Gastrocnemius medialis (tissue), 4 donors: ENCODE measurements at regions of chr17 and their contacts with region 1.

Region 1: DNA sequence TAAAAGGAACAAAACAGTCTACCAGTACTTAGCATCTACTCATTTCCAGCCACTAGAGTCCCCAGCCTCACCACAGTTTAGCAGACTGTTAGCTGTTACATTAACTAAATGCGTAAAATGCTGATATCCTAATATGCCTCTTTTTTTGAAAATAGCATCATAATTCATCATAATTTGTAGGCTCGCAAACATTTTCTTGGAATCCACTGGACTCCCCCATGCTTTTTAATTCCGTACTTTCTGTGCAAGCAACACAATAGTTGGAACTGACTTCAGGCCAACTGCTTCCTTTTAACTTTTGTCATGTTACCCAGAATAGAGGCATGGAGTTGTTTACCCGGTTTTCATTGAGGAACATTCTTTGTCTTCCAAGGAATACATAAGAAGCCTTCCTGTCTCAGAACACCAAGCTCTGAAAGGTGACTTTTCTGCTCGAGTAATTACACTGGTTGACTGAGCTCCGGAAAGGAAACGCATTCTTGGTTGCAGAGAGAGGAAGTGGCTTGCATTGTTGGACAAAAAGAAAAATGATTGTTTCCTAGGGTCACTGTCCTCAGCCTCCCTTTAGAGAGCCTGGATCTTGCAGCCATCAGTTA is 30.9 kb upstream of the SEC14L1 start:
- DNase-seq: peak in 1 of 2 donors; percentile 23
- ATAC-seq: peak; percentile 83 to 97
- H3K4me3 ChIP-seq: no peak overlapping the region
- H3K27ac ChIP-seq: peak overlapping the region; percentile 71 to 92 (median 80)
- H3K4me1 ChIP-seq: peaks cover 19 to 36% of the 10 kb centered on the region in 2 donors
- H3K27me3 ChIP-seq: no peaks in the 10 kb centered on the region
- CTCF ChIP-seq: no peak
- POLR2A ChIP-seq: peak in 1 of 2 donors; percentile 28

Region 2: GRCh38 chr17:76865174-76865573 is 244.7 kb before region 1 on chr17:
- in situ Hi-C with region 1: no loop called
- intact Hi-C with region 1: no loop called
- DNase-seq: no peak
- ATAC-seq: no peak
- H3K4me3 ChIP-seq: no peak overlapping the region
- H3K27ac ChIP-seq: no peak overlapping the region
- H3K4me1 ChIP-seq: peaks cover 0 to 3% of the 10 kb centered on the region in 2 donors
- H3K27me3 ChIP-seq: peaks cover 13 to 18% (median 14%) of the 10 kb centered on the region in 3 donors
- CTCF ChIP-seq: no peak
- POLR2A ChIP-seq: no peak

Region 3: DNA sequence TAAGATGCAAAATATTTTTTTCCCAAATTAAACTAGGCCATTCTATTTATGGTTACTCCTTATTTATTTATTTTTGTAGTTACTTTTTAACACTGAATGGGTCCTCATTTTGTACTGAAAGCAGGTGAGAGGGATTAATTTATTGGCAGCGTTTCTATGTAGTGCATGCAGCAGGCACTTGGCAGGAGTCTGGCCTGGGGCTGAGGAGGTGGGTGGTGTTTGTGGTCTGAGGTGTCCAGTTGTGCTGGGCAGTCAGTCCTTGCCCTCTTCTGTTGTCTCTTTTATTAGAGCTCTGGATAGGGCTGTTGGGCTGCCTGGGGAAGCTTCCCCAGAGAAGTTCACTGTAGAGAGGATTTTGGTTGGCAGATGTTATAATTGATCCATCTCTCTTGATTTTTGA is 43.6 kb after region 1 on chr17:
- in situ Hi-C with region 1: loop called in 1 of 4 experiments (anchors 10 kb)
- intact Hi-C with region 1: no loop called
- DNase-seq: peak; percentile 33 to 71
- ATAC-seq: peak; percentile 64 to 74
- H3K4me3 ChIP-seq: peak overlapping the region; percentile 5 to 35 (median 10)
- H3K27ac ChIP-seq: peak overlapping the region; percentile 92 to 96 (median 94)
- H3K4me1 ChIP-seq: peaks cover 93 to 96% of the 10 kb centered on the region in 2 donors
- H3K27me3 ChIP-seq: no peaks in the 10 kb centered on the region
- CTCF ChIP-seq: no peak
- POLR2A ChIP-seq: no peak